HEK293T (cell line): ENCODE measurements at regions of chr6 and their contacts with region 1.

Region 1: DNA sequence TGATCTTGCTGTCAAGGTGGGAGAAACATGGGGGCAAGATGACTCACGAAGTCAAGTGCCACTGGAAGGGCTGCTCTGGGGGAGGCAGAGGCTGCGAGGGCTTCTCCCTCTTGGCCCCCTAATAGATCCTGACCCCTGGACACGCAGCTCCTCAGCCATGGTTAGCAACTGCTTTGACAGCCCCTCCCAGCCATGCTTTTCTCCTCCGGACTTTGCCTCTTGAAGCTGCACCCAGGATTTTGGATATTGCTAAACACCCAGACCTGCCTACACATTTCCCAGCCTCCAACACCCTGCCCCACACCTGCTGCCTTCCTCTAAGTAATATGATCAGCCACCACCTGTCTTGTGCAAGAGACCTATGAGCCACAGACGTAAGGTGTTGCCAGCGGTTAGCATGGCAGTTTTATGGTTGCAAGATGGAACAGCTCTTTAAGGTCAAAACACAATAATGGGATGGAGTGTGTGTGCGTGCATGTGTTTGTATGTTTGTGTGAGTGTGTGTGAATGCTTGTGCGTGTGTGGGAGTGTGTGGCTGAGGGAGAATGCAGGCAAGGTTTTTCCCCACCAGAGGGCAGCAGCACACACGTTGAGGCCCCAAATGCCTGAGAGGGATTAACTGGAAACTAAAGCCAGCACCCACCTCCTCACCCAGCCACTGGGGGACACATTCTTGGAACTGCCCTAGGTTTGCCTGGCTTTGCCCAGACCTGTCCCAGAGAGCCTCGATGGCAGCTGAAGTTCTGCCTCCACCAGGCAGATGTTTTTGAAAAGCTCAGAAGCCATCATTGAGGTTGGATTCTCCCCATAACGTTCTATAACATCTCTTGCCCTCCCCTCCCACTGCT is 2.5 kb downstream of the IP6K3 start:
- DNase-seq: peak; percentile 87

Region 2: DNA sequence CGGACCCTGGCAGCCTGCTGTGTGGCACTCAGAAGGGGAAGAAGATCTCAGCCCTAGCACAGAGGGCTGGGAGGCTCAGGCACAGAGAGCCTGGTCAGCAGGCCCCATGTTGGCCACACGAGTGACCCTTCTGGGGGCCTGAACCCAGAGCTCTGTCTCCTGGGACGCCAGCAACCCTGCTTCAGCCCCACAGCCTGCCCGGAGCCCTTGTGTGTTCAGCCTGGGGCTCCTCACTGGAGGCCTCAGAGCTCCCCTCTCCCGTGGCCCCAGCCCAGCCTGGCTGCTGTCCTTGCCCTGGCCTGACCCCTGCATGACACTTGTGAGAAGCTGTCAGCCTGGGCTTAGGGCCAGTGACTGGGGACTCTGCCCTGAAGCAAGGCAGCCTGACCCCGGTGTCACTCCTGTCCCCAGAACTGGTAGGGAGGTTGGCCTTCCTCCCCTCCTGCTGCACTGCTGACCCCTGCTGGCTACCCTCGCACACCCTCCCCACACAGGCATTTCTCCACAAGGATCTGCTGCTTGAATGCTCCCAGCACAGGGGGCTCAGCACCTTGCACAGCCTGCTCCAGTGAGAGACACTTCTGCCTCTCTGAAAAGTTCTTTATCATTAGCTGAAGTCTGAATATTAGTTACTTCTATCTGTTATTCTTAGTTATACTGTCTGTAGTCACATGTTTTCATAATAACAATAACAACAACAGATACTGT is 17.9 kb after region 1 on chr6:
- CTCF ChIA-PET with region 1: interaction called, 11 read pairs
- POLR2A ChIA-PET with region 1: interaction called, 4 read pairs
- DNase-seq: peak; percentile 50